Endothelial cell of umbilical vein (primary cell): ENCODE measurements at regions of chr6 and their contacts with region 1.

Region 1: GRCh38 chr6:16128759-16129622 is at the start of gene MYLIP:
- DNase-seq: peak; percentile 95
- H3K4me3 ChIP-seq: peak within 1 kb of the TSS; percentile 68 to 98 (median 71)
- H3K27ac ChIP-seq: peak within 1 kb of the TSS; percentile 71
- H3K4me1 ChIP-seq: peaks cover 24% of the 10 kb centered on the region
- H3K27me3 ChIP-seq: peaks cover 6% of the 10 kb centered on the region in 2 experiments
- CTCF ChIP-seq: peak; percentile 62 to 87
- POLR2A ChIP-seq: peak; percentile 99
- total RNA-seq, gene MYLIP: 15.4 and 19.2 TPM in 2 replicates

Region 2: GRCh38 chr6:15870333-15871043 is 258.5 kb before region 1 on chr6:
- CTCF ChIA-PET with region 1: interaction called, 6 read pairs
- POLR2A ChIA-PET with region 1: interaction called, 5 read pairs
- dilution Hi-C with region 1: no loop called
- intact Hi-C with region 1: loop called (anchors 1 kb)
- DNase-seq: peak; percentile 91
- H3K4me3 ChIP-seq: no peak overlapping the region
- H3K27ac ChIP-seq: peak overlapping the region; percentile 36
- H3K4me1 ChIP-seq: peaks cover 29% of the 10 kb centered on the region
- H3K27me3 ChIP-seq: no peaks in the 10 kb centered on the region
- CTCF ChIP-seq: no peak
- POLR2A ChIP-seq: no peak

Region 3: DNA sequence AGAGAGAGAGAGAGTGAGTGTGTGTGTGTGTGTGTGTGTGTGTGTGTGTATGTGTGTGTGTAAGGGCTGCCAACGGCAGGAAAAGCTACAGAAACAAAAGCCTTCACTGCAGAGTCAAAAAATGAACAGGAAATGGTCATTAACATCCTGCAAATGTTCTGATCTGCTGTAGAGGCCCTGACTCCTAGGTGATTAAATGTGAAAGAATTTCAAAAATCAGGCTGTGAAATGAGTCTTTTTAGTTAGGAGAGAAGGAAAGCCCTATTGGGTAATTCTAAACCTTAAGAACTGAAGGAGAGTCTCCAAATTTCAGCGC is 166.6 kb before region 1 on chr6:
- CTCF ChIA-PET with region 1: no interaction called
- POLR2A ChIA-PET with region 1: no interaction called
- dilution Hi-C with region 1: no loop called
- intact Hi-C with region 1: loop called (anchors 1 kb)
- DNase-seq: peak; percentile 92
- H3K4me3 ChIP-seq: no peak overlapping the region
- H3K27ac ChIP-seq: peak overlapping the region; percentile 91
- H3K4me1 ChIP-seq: peaks cover 20% of the 10 kb centered on the region
- H3K27me3 ChIP-seq: no peaks in the 10 kb centered on the region
- CTCF ChIP-seq: no peak
- POLR2A ChIP-seq: peak; percentile 58

Region 4: GRCh38 chr6:16163535-16164300 is 34.7 kb after region 1 on chr6:
- CTCF ChIA-PET with region 1: interaction called, 12 read pairs
- POLR2A ChIA-PET with region 1: no interaction called
- dilution Hi-C with region 1: no loop called
- intact Hi-C with region 1: loop called (anchors 1 kb)
- DNase-seq: peak; percentile 41
- H3K4me3 ChIP-seq: no peak overlapping the region
- H3K27ac ChIP-seq: no peak overlapping the region
- H3K4me1 ChIP-seq: peaks cover 7% of the 10 kb centered on the region
- H3K27me3 ChIP-seq: no peaks in the 10 kb centered on the region
- CTCF ChIP-seq: no peak
- POLR2A ChIP-seq: no peak

Region 5: DNA sequence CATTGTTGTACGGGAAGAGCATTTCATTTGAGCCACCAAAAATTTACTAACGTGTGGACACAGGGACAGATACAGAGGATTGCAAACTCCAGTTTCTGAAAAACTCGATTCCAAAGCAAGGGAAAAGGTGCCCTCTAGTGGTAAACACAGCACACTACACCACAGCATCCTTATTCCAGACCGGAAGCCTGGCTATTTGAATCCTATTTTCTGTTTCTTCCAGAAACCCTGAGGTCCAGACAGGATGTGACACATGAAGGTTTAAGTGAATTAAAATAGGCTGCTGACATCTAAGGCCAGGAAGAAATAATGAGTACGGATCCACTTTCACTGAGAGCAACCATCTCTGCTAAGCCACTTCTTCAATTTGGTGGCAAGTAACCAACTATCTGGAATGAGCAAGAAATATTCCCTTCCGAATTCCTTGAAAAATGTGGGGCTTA is 77.6 kb after region 1 on chr6:
- CTCF ChIA-PET with region 1: interaction called, 4 read pairs
- POLR2A ChIA-PET with region 1: interaction called, 3 read pairs
- dilution Hi-C with region 1: no loop called
- intact Hi-C with region 1: loop called (anchors 1 kb)
- DNase-seq: peak; percentile 90
- H3K4me3 ChIP-seq: no peak overlapping the region
- H3K27ac ChIP-seq: peak overlapping the region; percentile 75
- H3K4me1 ChIP-seq: peaks cover 14% of the 10 kb centered on the region
- H3K27me3 ChIP-seq: no peaks in the 10 kb centered on the region
- CTCF ChIP-seq: peak; percentile 84 to 94
- POLR2A ChIP-seq: no peak

Region 6: GRCh38 chr6:17865798-17866725 is 1737.1 kb after region 1 on chr6:
- CTCF ChIA-PET with region 1: no interaction called
- POLR2A ChIA-PET with region 1: no interaction called
- dilution Hi-C with region 1: no loop called
- intact Hi-C with region 1: loop called (anchors 5 kb)
- DNase-seq: peak; percentile 97
- H3K4me3 ChIP-seq: no peak overlapping the region
- H3K27ac ChIP-seq: peak overlapping the region; percentile 89
- H3K4me1 ChIP-seq: peaks cover 67% of the 10 kb centered on the region
- H3K27me3 ChIP-seq: no peaks in the 10 kb centered on the region
- CTCF ChIP-seq: no peak
- POLR2A ChIP-seq: no peak